H1 (cell line): ENCODE measurements at regions of chr17 and their contacts with region 1.

Region 1: GRCh38 chr17:76547184-76547641 is 7.4 kb downstream of the PRCD start:
- DNase-seq: no peak
- H3K4me3 ChIP-seq: no peak overlapping the region
- H3K27ac ChIP-seq: no peak overlapping the region
- H3K4me1 ChIP-seq: peaks cover 4 to 30% (median 10%) of the 10 kb centered on the region in 4 experiments; a peak in 6 of 7 replicates
- H3K27me3 ChIP-seq: no peaks in the 10 kb centered on the region; a peak in 1 of 7 replicates
- CTCF ChIP-seq: peak; percentile 63 to 82 (median 65)
- EP300 ChIP-seq: no peak
- POLR2A ChIP-seq: no peak
- RAD21 ChIP-seq: peak; percentile 83 to 89

Region 2: DNA sequence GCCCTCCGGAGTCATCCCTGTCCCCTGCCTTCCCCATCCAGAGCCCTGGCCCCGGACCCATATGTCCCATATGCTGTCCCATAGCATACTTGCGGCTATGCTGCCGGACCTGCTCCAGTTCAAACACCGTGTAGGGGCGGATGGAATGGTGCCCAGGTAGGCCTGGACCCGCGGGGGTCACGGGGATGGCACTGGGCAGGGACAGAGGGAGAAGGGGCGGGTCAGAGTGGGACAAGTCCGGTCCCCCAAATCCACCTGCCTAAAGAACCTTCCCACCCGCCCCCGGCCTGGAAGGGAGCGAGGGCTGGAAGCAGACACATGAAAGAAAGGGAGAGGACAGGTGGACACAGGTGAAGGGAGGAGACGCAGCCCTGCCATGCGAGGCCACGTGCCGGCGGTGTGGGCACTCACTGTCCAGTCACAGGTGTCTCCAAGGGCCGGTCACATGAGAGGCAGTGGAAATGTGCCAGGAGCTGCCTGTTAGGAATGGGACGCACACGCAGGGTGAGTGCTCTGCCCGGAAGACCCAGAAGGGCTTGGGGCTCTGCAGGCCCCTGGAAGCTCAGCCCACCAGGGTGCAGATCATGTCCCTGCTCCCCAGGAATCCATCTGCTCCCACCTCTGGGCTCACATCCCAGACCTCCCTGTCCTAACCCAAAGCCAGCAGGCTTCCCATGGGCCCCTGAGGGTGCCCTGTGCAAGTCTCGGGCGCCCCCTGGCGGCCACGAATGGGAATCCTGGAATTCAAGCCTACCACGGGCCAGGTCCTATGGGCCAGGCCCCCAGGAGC is 268.1 kb before region 1 on chr17:
- CTCF ChIA-PET with region 1: no interaction called
- POLR2A ChIA-PET with region 1: no interaction called
- DNase-seq: peak; percentile 73 to 98
- H3K4me3 ChIP-seq: no peak overlapping the region
- H3K27ac ChIP-seq: no peak overlapping the region
- H3K4me1 ChIP-seq: peaks cover 0 to 4% (median under 1%) of the 10 kb centered on the region in 4 experiments; a peak in 3 of 7 replicates
- H3K27me3 ChIP-seq: no peaks in the 10 kb centered on the region
- CTCF ChIP-seq: peak; percentile 84 to 97 (median 94)
- EP300 ChIP-seq: no peak
- POLR2A ChIP-seq: no peak
- RAD21 ChIP-seq: peak; percentile 95 to 99

Region 3: DNA sequence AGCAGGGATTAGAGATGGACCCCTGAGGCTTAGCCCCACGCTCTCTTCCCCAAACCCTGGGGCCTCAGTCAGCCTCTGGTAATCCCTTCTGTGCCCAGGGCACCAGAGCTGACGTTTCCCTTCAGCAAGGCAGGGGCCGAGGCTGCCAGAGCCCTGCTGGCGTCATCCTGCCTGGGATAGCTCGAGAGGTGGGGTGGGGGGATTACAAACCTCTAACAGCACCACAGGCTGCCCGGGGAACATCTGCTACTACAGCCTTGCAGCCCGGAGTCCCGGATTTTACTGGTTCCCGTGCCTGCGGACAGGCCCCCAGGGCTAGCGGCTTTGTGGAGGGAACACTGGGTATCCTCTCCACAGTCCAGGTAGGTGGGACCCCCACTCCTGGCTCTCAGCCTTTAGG is 79.8 kb before region 1 on chr17 and contains the start of gene AANAT:
- CTCF ChIA-PET with region 1: interaction called, 12 read pairs
- POLR2A ChIA-PET with region 1: no interaction called
- DNase-seq: peak in 1 of 2 experiments; percentile 47
- H3K4me3 ChIP-seq: no peak within 1 kb of the TSS
- H3K27ac ChIP-seq: no peak within 1 kb of the TSS
- H3K4me1 ChIP-seq: peaks cover 0 to 9% (median 0%) of the 10 kb centered on the region in 4 experiments; a peak in 2 of 7 replicates
- H3K27me3 ChIP-seq: no peaks in the 10 kb centered on the region
- CTCF ChIP-seq: no peak
- EP300 ChIP-seq: no peak
- POLR2A ChIP-seq: no peak
- RAD21 ChIP-seq: no peak
- total RNA-seq, gene AANAT: not detected in 2 replicates

Region 4: DNA sequence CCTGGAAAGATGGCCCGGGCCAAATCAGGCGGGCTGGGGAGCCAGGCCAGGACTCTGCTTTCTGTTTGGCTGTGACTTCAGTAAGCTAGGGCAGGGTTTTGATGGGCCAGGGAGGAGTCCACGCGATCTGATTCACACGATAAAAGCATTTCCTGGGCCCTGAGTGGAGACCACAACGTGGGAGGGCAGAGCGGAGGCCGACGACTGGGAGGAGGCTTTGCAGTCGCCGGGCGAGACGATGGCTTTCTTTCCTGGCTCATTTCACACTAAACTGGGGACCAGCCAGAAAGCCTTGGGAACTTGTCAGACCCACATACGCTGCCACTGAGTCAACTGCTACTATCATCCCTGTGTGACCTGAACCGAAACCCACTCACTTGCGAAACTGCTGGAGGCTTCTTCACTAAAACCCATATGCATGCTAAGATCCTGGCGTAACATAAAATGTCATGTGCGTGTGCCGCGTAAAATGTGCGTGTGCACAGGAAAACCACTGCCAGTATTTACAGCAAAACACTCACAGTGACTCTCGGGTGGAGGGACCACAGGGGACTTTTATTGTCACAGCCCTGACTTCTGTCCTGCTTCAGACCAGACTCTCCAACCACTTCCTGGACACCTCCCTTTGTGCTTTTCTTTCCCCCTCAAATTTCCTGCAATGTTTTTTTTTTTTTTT is 31.8 kb before region 1 on chr17:
- CTCF ChIA-PET with region 1: interaction called, 260 read pairs
- POLR2A ChIA-PET with region 1: interaction called, 3 read pairs
- DNase-seq: no peak
- H3K4me3 ChIP-seq: no peak overlapping the region
- H3K27ac ChIP-seq: no peak overlapping the region
- H3K4me1 ChIP-seq: peaks cover 0 to 4% (median 0%) of the 10 kb centered on the region in 4 experiments; a peak in 3 of 7 replicates
- H3K27me3 ChIP-seq: no peaks in the 10 kb centered on the region
- CTCF ChIP-seq: no peak
- EP300 ChIP-seq: no peak
- POLR2A ChIP-seq: no peak
- RAD21 ChIP-seq: no peak

Region 5: DNA sequence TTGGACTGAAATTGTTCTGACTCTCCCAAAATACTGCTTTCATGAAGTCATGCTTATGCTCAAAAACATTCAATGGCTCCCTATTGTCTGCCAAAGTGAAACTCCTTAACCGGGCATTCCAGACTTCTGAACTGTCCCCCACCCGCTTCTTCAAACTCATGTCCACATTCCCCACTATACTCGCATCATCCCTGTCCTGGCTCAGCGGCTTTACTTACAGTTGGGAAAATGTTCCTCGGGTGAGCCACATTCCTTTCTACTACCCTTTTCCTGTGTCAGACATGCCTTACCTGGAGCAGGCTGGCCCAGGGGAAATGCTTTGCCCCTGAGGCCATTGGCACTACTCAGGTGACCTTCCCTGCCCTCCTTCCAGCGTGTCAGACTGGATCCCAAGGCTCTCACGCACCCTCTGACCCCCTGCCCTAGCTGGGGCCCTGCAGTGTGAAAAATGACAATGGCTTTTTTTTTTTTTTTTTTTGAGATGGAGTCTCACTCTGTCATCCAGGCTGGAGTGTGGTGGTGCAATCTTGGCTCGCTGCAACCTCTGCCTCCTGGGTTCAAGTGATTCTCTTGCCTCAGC is 15.1 kb before region 1 on chr17:
- CTCF ChIA-PET with region 1: interaction called, 41 read pairs
- POLR2A ChIA-PET with region 1: interaction called, 5 read pairs
- DNase-seq: no peak
- H3K4me3 ChIP-seq: no peak overlapping the region
- H3K27ac ChIP-seq: no peak overlapping the region
- H3K4me1 ChIP-seq: peaks cover 0 to 27% (median 21%) of the 10 kb centered on the region in 4 experiments; a peak in 6 of 7 replicates
- H3K27me3 ChIP-seq: peaks cover 1 to 19% (median 11%) of the 10 kb centered on the region in 4 experiments; a peak in 6 of 7 replicates
- CTCF ChIP-seq: no peak
- EP300 ChIP-seq: no peak
- POLR2A ChIP-seq: no peak
- RAD21 ChIP-seq: no peak

Region 6: GRCh38 chr17:76612977-76613851 is 66.0 kb after region 1 on chr17:
- CTCF ChIA-PET with region 1: interaction called, 11 read pairs
- POLR2A ChIA-PET with region 1: no interaction called
- DNase-seq: peak; percentile 51 to 80
- H3K4me3 ChIP-seq: no peak overlapping the region
- H3K27ac ChIP-seq: no peak overlapping the region
- H3K4me1 ChIP-seq: peaks cover 0 to 4% (median 1%) of the 10 kb centered on the region in 4 experiments; a peak in 3 of 7 replicates
- H3K27me3 ChIP-seq: no peaks in the 10 kb centered on the region
- CTCF ChIP-seq: peak; percentile 48 to 84 (median 57)
- EP300 ChIP-seq: no peak
- POLR2A ChIP-seq: no peak
- RAD21 ChIP-seq: peak; percentile 55 to 68

Region 7: GRCh38 chr17:76658001-76658662 is 110.9 kb after region 1 on chr17:
- CTCF ChIA-PET with region 1: no interaction called
- POLR2A ChIA-PET with region 1: no interaction called
- DNase-seq: no peak
- H3K4me3 ChIP-seq: no peak overlapping the region
- H3K27ac ChIP-seq: no peak overlapping the region
- H3K4me1 ChIP-seq: no peaks in the 10 kb centered on the region
- H3K27me3 ChIP-seq: no peaks in the 10 kb centered on the region
- CTCF ChIP-seq: no peak
- EP300 ChIP-seq: no peak
- POLR2A ChIP-seq: no peak
- RAD21 ChIP-seq: no peak